ENCODE measurements at regions of chr1 and their contacts with region 1.

Region 1: DNA sequence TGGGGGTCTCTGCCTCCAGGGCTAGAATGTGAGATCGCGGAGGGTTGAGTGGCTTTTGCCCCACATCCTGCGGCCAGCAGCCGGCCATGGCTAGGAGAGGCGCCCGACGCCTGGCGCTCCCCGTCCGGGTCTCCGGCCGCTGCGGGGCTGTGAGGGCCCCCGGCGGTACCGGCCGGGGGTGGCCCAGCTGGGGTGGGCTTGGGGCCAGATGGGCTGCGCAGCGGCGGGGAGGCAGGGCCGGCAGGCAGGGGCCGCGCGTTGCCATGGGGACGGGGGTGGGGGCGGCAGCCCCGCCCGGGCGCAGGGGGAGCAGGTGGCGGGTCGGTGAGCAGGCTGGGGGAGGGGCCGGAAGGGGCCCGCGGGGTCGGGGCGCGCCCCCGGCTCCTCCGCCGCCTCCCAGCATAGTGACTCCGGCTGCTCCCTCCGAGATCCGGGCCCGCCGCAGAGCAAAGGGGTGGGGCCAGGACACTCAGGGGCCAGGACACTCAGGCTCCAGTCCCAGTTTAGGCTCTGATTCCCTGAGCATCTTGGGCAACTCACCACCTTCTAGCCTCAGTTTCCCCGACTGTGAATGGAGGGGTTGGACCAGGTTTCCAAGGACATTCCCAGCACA is 68.6 kb upstream of the SSBP3 start:
- DNase-seq: peak in 2 of 5 donors; percentile 33 to 38
- H3K4me3 ChIP-seq: peak overlapping the region; percentile 22 to 57
- H3K4me3 Mint-ChIP-seq: peak overlapping the region; percentile 78 to 93 (median 84)
- H3K27ac ChIP-seq: peak overlapping the region; percentile 47
- H3K27ac Mint-ChIP-seq: peak overlapping the region; percentile 87 to 97 (median 95)
- H3K4me1 ChIP-seq: peaks cover 53% of the 10 kb centered on the region
- H3K4me1 Mint-ChIP-seq: peaks cover 34 to 58% (median 45%) of the 10 kb centered on the region in 4 donors
- H3K27me3 ChIP-seq: no peaks in the 10 kb centered on the region
- H3K27me3 Mint-ChIP-seq: peaks cover 0 to 2% of the 10 kb centered on the region in 2 donors

Region 2: GRCh38 chr1:54453022-54453421 is 21.7 kb before region 1 on chr1:
- CTCF ChIA-PET with region 1: no interaction called
- POLR2A ChIA-PET with region 1: no interaction called
- intact Hi-C with region 1: no loop called
- DNase-seq: no peak
- H3K4me3 ChIP-seq: no peak overlapping the region
- H3K4me3 Mint-ChIP-seq: no peak overlapping the region
- H3K27ac ChIP-seq: no peak overlapping the region
- H3K27ac Mint-ChIP-seq: no peak overlapping the region
- H3K4me1 ChIP-seq: no peaks in the 10 kb centered on the region
- H3K4me1 Mint-ChIP-seq: peaks cover 0 to 1% (median 0%) of the 10 kb centered on the region in 4 donors
- H3K27me3 ChIP-seq: no peaks in the 10 kb centered on the region
- H3K27me3 Mint-ChIP-seq: peaks cover 0 to 2% of the 10 kb centered on the region in 2 donors

Region 3: GRCh38 chr1:54464482-54465146 is 10.1 kb before region 1 on chr1:
- CTCF ChIA-PET with region 1: interaction called, 3 read pairs
- POLR2A ChIA-PET with region 1: interaction called, 121 read pairs
- intact Hi-C with region 1: loop called (anchors 2 kb)
- DNase-seq: no peak
- H3K4me3 ChIP-seq: no peak overlapping the region
- H3K4me3 Mint-ChIP-seq: no peak overlapping the region
- H3K27ac ChIP-seq: no peak overlapping the region
- H3K27ac Mint-ChIP-seq: peak overlapping the region in 2 of 7 donors; percentile 12 to 74
- H3K4me1 ChIP-seq: peaks cover 43% of the 10 kb centered on the region
- H3K4me1 Mint-ChIP-seq: peaks cover 24 to 50% (median 35%) of the 10 kb centered on the region in 4 donors
- H3K27me3 ChIP-seq: no peaks in the 10 kb centered on the region
- H3K27me3 Mint-ChIP-seq: no peaks in the 10 kb centered on the region

Measured in CD4-positive, alpha-beta memory T cell (primary cell).